Natural killer cell (primary cell): ENCODE measurements at regions of chr16 and their contacts with region 1.

Region 1: DNA sequence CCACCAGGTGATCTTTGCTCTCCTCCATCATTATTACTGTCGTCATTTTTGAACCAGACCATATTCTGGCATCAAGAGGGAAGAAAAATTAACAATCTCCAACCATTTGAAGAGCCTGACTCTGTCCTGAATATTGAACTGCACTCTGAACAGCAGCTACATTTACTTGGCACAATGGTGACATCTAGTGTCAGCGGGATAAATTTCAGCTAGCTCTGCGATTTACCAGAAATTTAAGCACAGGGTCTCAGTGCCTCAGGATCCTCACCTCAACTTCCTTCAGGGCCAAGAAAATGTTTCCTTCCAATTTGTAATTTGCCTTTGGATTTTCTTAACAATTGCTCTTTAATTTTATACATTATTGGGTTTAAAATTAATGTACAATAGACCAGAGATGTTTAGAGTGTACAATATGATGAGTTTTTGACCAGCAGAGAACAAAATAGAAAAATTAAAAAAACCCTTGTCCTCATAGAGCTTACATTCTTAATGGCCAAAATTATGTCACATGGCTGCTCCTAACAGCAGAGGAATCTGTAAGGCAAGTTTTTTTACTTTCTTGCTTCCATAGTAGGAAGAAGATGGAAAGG is 10.7 kb upstream of the ZNF19 start:
- DNase-seq: peak; percentile 22 to 83
- ATAC-seq: peak; percentile 54 to 78 (median 78)
- H3K4me3 ChIP-seq: no peak overlapping the region
- H3K4me3 Mint-ChIP-seq: no peak overlapping the region
- H3K27ac ChIP-seq: no peak overlapping the region
- H3K27ac Mint-ChIP-seq: no peak overlapping the region
- H3K4me1 ChIP-seq: no peaks in the 10 kb centered on the region
- H3K4me1 Mint-ChIP-seq: no peaks in the 10 kb centered on the region
- H3K27me3 ChIP-seq: no peaks in the 10 kb centered on the region
- H3K27me3 Mint-ChIP-seq: peaks cover 0 to 19% of the 10 kb centered on the region in 2 donors
- CTCF ChIP-seq: peak; percentile 83

Region 2: GRCh38 chr16:71441348-71441781 is 58.5 kb before region 1 on chr16:
- intact Hi-C with region 1: loop called (anchors 2 kb)
- DNase-seq: peak; percentile 41 to 48
- ATAC-seq: peak in 2 of 3 donors; percentile 35 to 65
- H3K4me3 ChIP-seq: no peak overlapping the region
- H3K4me3 Mint-ChIP-seq: no peak overlapping the region
- H3K27ac ChIP-seq: no peak overlapping the region
- H3K27ac Mint-ChIP-seq: no peak overlapping the region
- H3K4me1 ChIP-seq: no peaks in the 10 kb centered on the region
- H3K4me1 Mint-ChIP-seq: peaks cover 0 to 5% of the 10 kb centered on the region in 2 donors
- H3K27me3 ChIP-seq: no peaks in the 10 kb centered on the region
- H3K27me3 Mint-ChIP-seq: peaks cover 7 to 12% of the 10 kb centered on the region in 2 donors
- CTCF ChIP-seq: peak; percentile 60